ENCODE measurements at regions of chr1 and their contacts with region 1.

Region 1: DNA sequence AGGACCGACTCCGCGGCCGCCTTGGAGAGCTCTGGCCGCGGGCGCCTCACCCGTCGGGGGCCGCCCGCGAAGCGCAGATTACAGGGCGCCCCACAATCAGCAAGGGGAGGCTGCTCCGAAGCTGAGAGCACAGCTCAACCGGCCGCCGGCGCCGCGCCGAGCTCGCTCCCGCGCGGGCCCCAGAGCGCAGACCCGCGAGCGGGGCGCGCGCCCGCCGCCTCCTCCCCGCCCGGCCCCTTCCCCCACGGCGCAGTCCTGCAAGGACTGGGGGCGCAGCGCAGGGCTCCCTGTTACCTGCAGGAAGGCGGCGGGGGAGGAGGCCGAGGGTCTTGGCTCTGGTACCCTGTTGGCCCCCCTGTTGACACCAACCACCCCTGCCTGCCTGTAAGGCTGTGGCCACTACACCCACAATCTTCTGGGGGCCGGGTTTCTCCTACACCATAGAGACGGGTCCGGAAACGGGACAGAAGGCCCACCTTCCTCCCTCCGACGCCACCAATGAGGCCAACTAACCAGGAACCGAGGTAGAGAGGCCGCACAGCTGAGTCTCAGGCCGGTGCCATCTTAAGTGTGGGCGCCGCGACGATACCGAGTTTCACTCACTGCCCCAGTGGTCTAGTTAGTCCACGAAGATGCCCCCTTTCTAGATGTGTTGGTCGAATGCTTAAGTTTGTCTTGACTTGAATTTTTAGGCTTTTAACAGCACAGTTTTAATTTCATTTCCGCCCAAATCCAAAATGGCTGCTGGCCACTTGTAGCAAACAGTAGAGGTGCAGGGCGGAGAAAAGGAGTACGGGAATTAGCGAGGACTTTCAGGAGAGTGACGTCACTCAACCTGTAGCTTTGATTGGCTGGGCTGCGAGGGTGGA is at the start of gene SCYL3:
- DNase-seq: peak; percentile 92 to 96
- H3K4me3 ChIP-seq: peak within 1 kb of the TSS; percentile 63
- H3K4me3 Mint-ChIP-seq: peak within 1 kb of the TSS; percentile 85
- H3K27ac Mint-ChIP-seq: peak within 1 kb of the TSS; percentile 100
- H3K4me1 ChIP-seq: peaks cover 26% of the 10 kb centered on the region
- H3K4me1 Mint-ChIP-seq: peaks cover 28% of the 10 kb centered on the region
- H3K27me3 ChIP-seq: no peaks in the 10 kb centered on the region
- H3K27me3 Mint-ChIP-seq: peaks cover 8% of the 10 kb centered on the region
- CTCF ChIP-seq: no peak
- total RNA-seq, gene SCYL3: 5.9 and 6.7 TPM in 2 replicates

Region 2: DNA sequence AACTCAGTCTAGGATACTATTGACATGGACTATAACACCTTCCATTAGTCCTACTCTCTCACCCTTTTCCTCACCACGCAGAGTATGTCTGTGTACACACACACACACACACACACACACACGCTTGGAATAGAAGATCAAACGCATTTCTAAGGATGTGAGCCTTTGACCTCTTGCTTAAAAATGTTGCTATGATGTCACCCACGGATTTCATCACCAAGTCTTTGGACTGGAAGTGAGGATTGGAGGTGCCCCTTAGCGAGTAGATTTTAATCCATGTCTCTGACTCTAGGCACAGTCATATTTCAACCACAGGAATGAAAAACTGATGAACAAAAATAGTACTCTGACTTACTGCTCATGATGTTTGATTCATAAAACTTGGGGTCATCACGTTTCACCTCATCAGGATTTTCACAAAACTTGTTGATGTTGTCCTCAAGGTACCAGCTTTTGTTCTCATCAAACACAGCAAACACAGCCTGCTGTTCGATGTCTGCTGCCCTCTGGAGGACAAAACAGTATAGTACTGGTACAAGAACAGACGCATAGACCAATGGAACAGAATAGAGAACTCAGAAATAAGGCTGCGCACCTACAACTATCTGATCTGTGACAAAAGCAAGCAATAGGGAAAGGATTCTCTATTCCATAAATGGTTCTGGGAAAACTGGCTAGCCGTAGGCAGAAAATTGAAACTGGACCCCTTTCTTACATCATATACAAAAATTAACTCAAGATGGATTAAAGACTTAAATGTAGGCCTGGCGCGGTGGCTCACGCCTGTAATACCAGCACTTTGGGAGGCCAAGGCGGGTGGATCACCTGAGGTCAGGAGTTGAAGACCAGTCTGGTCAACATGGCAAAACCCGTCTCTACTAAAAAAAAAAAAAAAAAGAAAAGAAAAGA is 347.4 kb before region 1 on chr1:
- CTCF ChIA-PET with region 1: no interaction called
- POLR2A ChIA-PET with region 1: no interaction called
- intact Hi-C with region 1: no loop called
- DNase-seq: peak; percentile 72 to 80
- H3K4me3 ChIP-seq: no peak overlapping the region
- H3K4me3 Mint-ChIP-seq: no peak overlapping the region
- H3K27ac Mint-ChIP-seq: no peak overlapping the region
- H3K4me1 ChIP-seq: peaks cover 27% of the 10 kb centered on the region
- H3K4me1 Mint-ChIP-seq: peaks cover 26% of the 10 kb centered on the region
- H3K27me3 ChIP-seq: no peaks in the 10 kb centered on the region
- H3K27me3 Mint-ChIP-seq: no peaks in the 10 kb centered on the region
- CTCF ChIP-seq: peak; percentile 80 to 82

Region 3: GRCh38 chr1:169572187-169572586 is 321.5 kb before region 1 on chr1:
- CTCF ChIA-PET with region 1: no interaction called
- POLR2A ChIA-PET with region 1: interaction called, 3 read pairs
- intact Hi-C with region 1: loop called (anchors 5 kb)
- DNase-seq: peak; percentile 42 to 75
- H3K4me3 ChIP-seq: no peak overlapping the region
- H3K4me3 Mint-ChIP-seq: peak overlapping the region; percentile 3
- H3K27ac Mint-ChIP-seq: peak overlapping the region; percentile 90
- H3K4me1 ChIP-seq: peaks cover 57% of the 10 kb centered on the region
- H3K4me1 Mint-ChIP-seq: peaks cover 38% of the 10 kb centered on the region
- H3K27me3 ChIP-seq: no peaks in the 10 kb centered on the region
- H3K27me3 Mint-ChIP-seq: no peaks in the 10 kb centered on the region
- CTCF ChIP-seq: no peak

Region 4: GRCh38 chr1:169794530-169795416 is 99.0 kb before region 1 on chr1 and contains the start of gene METTL18:
- CTCF ChIA-PET with region 1: no interaction called
- POLR2A ChIA-PET with region 1: interaction called, 4 read pairs
- intact Hi-C with region 1: loop called (anchors 2 kb)
- DNase-seq: peak; percentile 93 to 96
- H3K4me3 ChIP-seq: peak within 1 kb of the TSS; percentile 74
- H3K4me3 Mint-ChIP-seq: peak within 1 kb of the TSS; percentile 100
- H3K27ac Mint-ChIP-seq: peak within 1 kb of the TSS; percentile 99
- H3K4me1 ChIP-seq: peaks cover 6% of the 10 kb centered on the region
- H3K4me1 Mint-ChIP-seq: peaks cover 6% of the 10 kb centered on the region
- H3K27me3 ChIP-seq: no peaks in the 10 kb centered on the region
- H3K27me3 Mint-ChIP-seq: no peaks in the 10 kb centered on the region
- CTCF ChIP-seq: no peak
- total RNA-seq, gene METTL18: 6.9 and 7.9 TPM in 2 replicates

Region 5: DNA sequence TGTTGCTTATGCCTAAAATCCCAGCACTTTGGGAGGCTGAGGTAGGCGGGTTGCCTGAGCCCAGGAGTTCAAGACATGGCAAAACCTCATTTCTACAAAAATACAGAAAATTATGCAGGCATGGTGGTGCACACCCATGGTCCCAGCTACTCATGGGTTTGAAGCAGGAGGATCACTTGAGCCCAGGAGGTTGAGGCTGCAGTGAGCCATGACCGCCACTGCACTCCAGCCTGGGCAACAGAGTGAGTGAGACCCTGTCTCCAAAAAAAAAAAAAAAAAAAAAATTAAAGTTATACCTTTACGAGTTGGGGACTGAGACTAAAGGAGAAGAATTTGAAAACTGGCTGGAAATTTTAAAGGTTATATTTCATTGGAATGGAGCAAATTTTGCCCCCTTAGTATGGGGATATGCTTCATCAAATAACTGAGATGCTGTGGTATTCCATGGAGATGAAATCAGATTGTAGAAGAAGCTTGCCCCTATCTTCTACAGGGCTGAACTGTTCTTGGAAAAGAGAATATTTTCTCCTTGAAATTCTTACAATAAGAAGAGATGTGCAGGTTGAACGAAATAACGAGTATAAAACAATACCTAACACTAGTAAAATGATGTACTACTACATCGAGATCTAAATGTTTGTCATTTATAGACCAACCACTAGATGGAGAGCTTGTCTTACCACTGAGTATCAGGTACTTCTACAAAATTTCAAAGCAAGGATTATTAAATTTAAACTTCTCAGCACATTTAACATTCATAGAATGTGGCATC is 34.9 kb after region 1 on chr1:
- CTCF ChIA-PET with region 1: no interaction called
- POLR2A ChIA-PET with region 1: no interaction called
- intact Hi-C with region 1: no loop called
- DNase-seq: peak in 1 of 2 experiments; percentile 32
- H3K4me3 ChIP-seq: no peak overlapping the region
- H3K4me3 Mint-ChIP-seq: no peak overlapping the region
- H3K27ac Mint-ChIP-seq: no peak overlapping the region
- H3K4me1 ChIP-seq: no peaks in the 10 kb centered on the region
- H3K4me1 Mint-ChIP-seq: peaks cover 5% of the 10 kb centered on the region
- H3K27me3 ChIP-seq: no peaks in the 10 kb centered on the region
- H3K27me3 Mint-ChIP-seq: no peaks in the 10 kb centered on the region
- CTCF ChIP-seq: peak; percentile 67 to 68

Region 6: DNA sequence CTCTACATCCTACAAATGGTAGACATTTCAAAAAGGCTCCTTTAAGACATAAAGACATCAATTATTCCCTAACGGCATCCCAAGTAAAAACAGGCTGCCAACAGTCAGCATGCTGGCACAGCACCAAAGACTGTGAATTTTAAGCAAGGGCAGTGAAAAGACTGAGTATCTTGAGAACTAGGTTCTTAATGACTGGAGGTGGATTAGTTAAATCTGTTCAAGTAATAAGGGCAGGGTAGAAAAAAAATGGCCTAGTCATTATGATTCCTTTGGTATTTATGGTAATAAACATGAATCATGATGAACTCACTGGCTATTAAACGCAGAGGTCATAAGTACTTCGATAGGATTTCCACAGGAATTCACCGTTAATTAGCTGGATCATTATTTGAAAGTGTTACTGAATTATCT is 105.6 kb after region 1 on chr1:
- CTCF ChIA-PET with region 1: no interaction called
- POLR2A ChIA-PET with region 1: no interaction called
- intact Hi-C with region 1: no loop called
- DNase-seq: no peak
- H3K4me3 ChIP-seq: no peak overlapping the region
- H3K4me3 Mint-ChIP-seq: no peak overlapping the region
- H3K27ac Mint-ChIP-seq: no peak overlapping the region
- H3K4me1 ChIP-seq: no peaks in the 10 kb centered on the region
- H3K4me1 Mint-ChIP-seq: no peaks in the 10 kb centered on the region
- H3K27me3 ChIP-seq: no peaks in the 10 kb centered on the region
- H3K27me3 Mint-ChIP-seq: no peaks in the 10 kb centered on the region
- CTCF ChIP-seq: no peak

Region 7: GRCh38 chr1:170074250-170075157 is 180.8 kb after region 1 on chr1 and contains the start of gene KIFAP3:
- CTCF ChIA-PET with region 1: no interaction called
- POLR2A ChIA-PET with region 1: interaction called, 7 read pairs
- intact Hi-C with region 1: loop called (anchors 1 kb)
- DNase-seq: peak; percentile 96 to 98
- H3K4me3 ChIP-seq: peak within 1 kb of the TSS; percentile 53
- H3K4me3 Mint-ChIP-seq: peak within 1 kb of the TSS; percentile 88
- H3K27ac Mint-ChIP-seq: peak within 1 kb of the TSS; percentile 85
- H3K4me1 ChIP-seq: no peaks in the 10 kb centered on the region
- H3K4me1 Mint-ChIP-seq: peaks cover 16% of the 10 kb centered on the region
- H3K27me3 ChIP-seq: no peaks in the 10 kb centered on the region
- H3K27me3 Mint-ChIP-seq: no peaks in the 10 kb centered on the region
- CTCF ChIP-seq: peak in 1 of 2 experiments; percentile 70
- total RNA-seq, gene KIFAP3: 10.9 and 11.0 TPM in 2 replicates

Measured in Caco-2 (cell line).